ENCODE measurements at regions of chr10 and their contacts with region 1.

Region 1: GRCh38 chr10:59709395-59710125 is at the start of gene SLC16A9:
- DNase-seq: peak; percentile 67 to 71
- H3K4me3 ChIP-seq: peak within 1 kb of the TSS; percentile 58
- H3K4me3 Mint-ChIP-seq: peak within 1 kb of the TSS; percentile 79
- H3K27ac Mint-ChIP-seq: no peak within 1 kb of the TSS
- H3K4me1 ChIP-seq: no peaks in the 10 kb centered on the region
- H3K4me1 Mint-ChIP-seq: no peaks in the 10 kb centered on the region
- H3K27me3 ChIP-seq: peaks cover 5% of the 10 kb centered on the region
- H3K27me3 Mint-ChIP-seq: peaks cover 37% of the 10 kb centered on the region
- CTCF ChIP-seq: peak; percentile 64 to 65
- total RNA-seq, gene SLC16A9: 0.26 and 0.45 TPM in 2 replicates

Region 2: GRCh38 chr10:59724098-59724938 is 14.8 kb after region 1 on chr10:
- CTCF ChIA-PET with region 1: no interaction called
- POLR2A ChIA-PET with region 1: no interaction called
- intact Hi-C with region 1: no loop called
- DNase-seq: no peak
- H3K4me3 ChIP-seq: no peak overlapping the region
- H3K4me3 Mint-ChIP-seq: no peak overlapping the region
- H3K27ac Mint-ChIP-seq: no peak overlapping the region
- H3K4me1 ChIP-seq: no peaks in the 10 kb centered on the region
- H3K4me1 Mint-ChIP-seq: no peaks in the 10 kb centered on the region
- H3K27me3 ChIP-seq: no peaks in the 10 kb centered on the region
- H3K27me3 Mint-ChIP-seq: no peaks in the 10 kb centered on the region
- CTCF ChIP-seq: no peak

Region 3: DNA sequence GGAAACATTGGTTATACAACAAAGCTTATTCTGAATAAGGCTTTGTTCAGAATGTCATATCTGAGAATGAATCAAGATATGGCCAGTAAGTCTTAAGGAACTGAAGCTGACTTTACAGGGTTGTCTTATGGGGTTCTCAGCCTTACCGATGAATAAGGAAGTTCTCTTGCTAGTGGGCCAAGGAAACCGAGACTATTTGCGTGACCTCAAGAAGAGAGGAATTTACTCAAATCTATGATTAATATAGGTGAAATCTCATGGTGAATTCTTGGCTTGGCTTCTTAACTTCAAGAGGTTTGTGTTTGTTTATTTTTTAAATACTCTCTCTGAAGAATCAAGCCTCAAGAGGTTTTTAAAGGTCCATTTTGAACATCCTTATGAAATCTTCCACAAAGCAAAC is 48.4 kb after region 1 on chr10:
- CTCF ChIA-PET with region 1: no interaction called
- POLR2A ChIA-PET with region 1: no interaction called
- intact Hi-C with region 1: no loop called
- DNase-seq: no peak
- H3K4me3 ChIP-seq: no peak overlapping the region
- H3K4me3 Mint-ChIP-seq: no peak overlapping the region
- H3K27ac Mint-ChIP-seq: no peak overlapping the region
- H3K4me1 ChIP-seq: no peaks in the 10 kb centered on the region
- H3K4me1 Mint-ChIP-seq: no peaks in the 10 kb centered on the region
- H3K27me3 ChIP-seq: no peaks in the 10 kb centered on the region
- H3K27me3 Mint-ChIP-seq: peaks cover 4% of the 10 kb centered on the region
- CTCF ChIP-seq: no peak

Region 4: GRCh38 chr10:59808896-59809643 is 99.5 kb after region 1 on chr10:
- CTCF ChIA-PET with region 1: interaction called, 5 read pairs
- POLR2A ChIA-PET with region 1: no interaction called
- intact Hi-C with region 1: loop called (anchors 2 kb)
- DNase-seq: peak; percentile 84 to 90
- H3K4me3 ChIP-seq: no peak overlapping the region
- H3K4me3 Mint-ChIP-seq: no peak overlapping the region
- H3K27ac Mint-ChIP-seq: no peak overlapping the region
- H3K4me1 ChIP-seq: no peaks in the 10 kb centered on the region
- H3K4me1 Mint-ChIP-seq: no peaks in the 10 kb centered on the region
- H3K27me3 ChIP-seq: no peaks in the 10 kb centered on the region
- H3K27me3 Mint-ChIP-seq: no peaks in the 10 kb centered on the region
- CTCF ChIP-seq: peak; percentile 87 to 92